CD4-positive, alpha-beta T cell (primary cell): ENCODE measurements at regions of chr13 and their contacts with region 1.

Region 1: DNA sequence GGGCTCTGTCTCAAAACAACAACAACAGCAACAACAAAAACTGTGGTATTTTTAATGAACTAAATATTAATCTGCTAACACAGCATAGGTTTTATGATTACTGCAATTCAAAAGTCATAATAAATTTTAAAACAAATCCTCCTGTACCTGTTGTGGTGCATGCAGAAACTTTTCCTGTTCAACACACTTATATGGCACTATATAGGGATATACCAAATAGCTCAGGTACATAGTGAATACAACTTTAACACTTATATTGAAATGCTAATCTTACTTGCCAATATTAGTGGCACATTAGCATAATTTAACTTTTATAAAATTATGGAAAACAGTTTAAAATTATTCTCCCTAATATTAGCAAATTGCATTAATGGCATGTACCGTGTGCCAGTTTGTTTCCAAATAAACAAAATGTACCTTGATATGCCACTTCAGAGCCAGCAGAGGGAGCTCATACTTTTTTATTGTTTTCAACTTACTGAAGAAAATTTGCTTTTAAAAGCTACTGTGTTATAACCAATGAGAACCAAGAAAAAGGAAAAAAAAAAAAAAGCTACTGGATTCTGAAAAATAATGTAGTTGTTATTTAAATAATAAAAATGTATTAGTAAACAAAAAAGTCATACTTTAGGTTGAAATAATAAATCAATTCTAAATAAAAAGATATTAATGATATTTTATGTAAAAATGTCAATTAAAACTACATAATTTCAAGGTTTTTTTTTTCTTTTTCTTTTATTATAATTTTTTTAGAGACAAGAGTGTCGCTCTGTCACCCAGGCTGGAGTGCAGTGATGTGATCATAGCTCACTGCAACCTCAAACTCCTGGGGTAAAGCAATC is 18.0 kb upstream of the RBM26 start:
- DNase-seq: peak in 4 of 14 experiments; percentile 21 to 73 (median 62)
- ATAC-seq: peak; percentile 71
- H3K4me3 ChIP-seq: no peak overlapping the region
- H3K4me3 Mint-ChIP-seq: no peak overlapping the region
- H3K27ac ChIP-seq: no peak overlapping the region
- H3K27ac Mint-ChIP-seq: no peak overlapping the region
- H3K4me1 ChIP-seq: no peaks in the 10 kb centered on the region
- H3K4me1 Mint-ChIP-seq: no peaks in the 10 kb centered on the region
- H3K27me3 ChIP-seq: no peaks in the 10 kb centered on the region
- H3K27me3 Mint-ChIP-seq: no peaks in the 10 kb centered on the region
- CTCF ChIP-seq: peak; percentile 86

Region 2: DNA sequence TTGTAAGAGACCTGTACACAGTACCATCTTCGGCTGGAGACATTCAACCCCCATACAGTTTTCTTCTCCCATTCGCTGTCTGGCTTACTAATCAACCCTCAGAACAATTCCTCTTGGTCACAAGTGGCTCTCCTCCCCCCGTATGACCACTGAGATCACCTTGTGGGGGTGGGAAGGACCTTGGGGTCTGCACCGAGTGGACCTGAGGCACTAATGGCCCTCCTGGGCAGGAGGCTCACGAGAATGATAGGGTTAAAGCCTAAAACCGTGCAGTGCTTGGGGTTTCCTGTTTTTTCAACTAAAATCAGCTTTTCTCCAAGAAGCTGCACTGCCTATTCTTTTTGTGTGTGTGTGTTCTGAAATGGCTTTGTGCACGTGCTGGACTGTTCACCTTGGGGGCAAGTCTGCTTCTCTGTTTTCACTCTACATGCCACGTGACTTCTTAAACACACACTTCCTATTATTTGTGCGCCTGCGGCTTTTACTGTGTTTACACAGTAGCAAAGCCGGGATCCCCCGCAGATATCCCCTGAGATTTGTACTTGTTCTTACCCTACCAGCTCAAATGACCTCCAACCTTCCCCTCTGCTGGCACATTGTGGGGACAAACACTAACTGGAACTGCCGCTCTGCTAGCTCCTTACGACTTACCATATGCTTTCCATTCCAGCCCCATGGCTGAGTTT is 30.3 kb before region 1 on chr13:
- CTCF ChIA-PET with region 1: interaction called, 7 read pairs
- POLR2A ChIA-PET with region 1: interaction called, 10 read pairs
- intact Hi-C with region 1: no loop called
- DNase-seq: peak in 13 of 14 experiments; percentile 12 to 75 (median 41)
- ATAC-seq: peak; percentile 62
- H3K4me3 ChIP-seq: peak overlapping the region; percentile 42
- H3K4me3 Mint-ChIP-seq: peak overlapping the region; percentile 86
- H3K27ac ChIP-seq: peak overlapping the region; percentile 63 to 65
- H3K27ac Mint-ChIP-seq: peak overlapping the region; percentile 84
- H3K4me1 ChIP-seq: peaks cover 28% of the 10 kb centered on the region
- H3K4me1 Mint-ChIP-seq: peaks cover 75% of the 10 kb centered on the region
- H3K27me3 ChIP-seq: no peaks in the 10 kb centered on the region
- H3K27me3 Mint-ChIP-seq: no peaks in the 10 kb centered on the region
- CTCF ChIP-seq: no peak

Region 3: GRCh38 chr13:79480954-79481684 is 57.1 kb after region 1 on chr13 and contains the start of gene NDFIP2:
- CTCF ChIA-PET with region 1: interaction called, 19 read pairs
- POLR2A ChIA-PET with region 1: interaction called, 3 read pairs
- intact Hi-C with region 1: no loop called
- DNase-seq: peak; percentile 57 to 93 (median 75)
- ATAC-seq: peak; percentile 82
- H3K4me3 ChIP-seq: peak within 1 kb of the TSS; percentile 82
- H3K4me3 Mint-ChIP-seq: peak within 1 kb of the TSS; percentile 95
- H3K27ac ChIP-seq: peak within 1 kb of the TSS in 1 of 2 donors; percentile 46
- H3K27ac Mint-ChIP-seq: peak within 1 kb of the TSS; percentile 79
- H3K4me1 ChIP-seq: peaks cover 20% of the 10 kb centered on the region
- H3K4me1 Mint-ChIP-seq: peaks cover 51% of the 10 kb centered on the region
- H3K27me3 ChIP-seq: no peaks in the 10 kb centered on the region
- H3K27me3 Mint-ChIP-seq: no peaks in the 10 kb centered on the region
- CTCF ChIP-seq: no peak
- total RNA-seq, gene NDFIP2: 3.2 to 3.4 TPM

Region 4: GRCh38 chr13:79528759-79529191 is 104.8 kb after region 1 on chr13:
- CTCF ChIA-PET with region 1: interaction called, 10 read pairs
- POLR2A ChIA-PET with region 1: no interaction called
- intact Hi-C with region 1: no loop called
- DNase-seq: no peak
- ATAC-seq: no peak
- H3K4me3 ChIP-seq: no peak overlapping the region
- H3K4me3 Mint-ChIP-seq: no peak overlapping the region
- H3K27ac ChIP-seq: no peak overlapping the region
- H3K27ac Mint-ChIP-seq: no peak overlapping the region
- H3K4me1 ChIP-seq: no peaks in the 10 kb centered on the region
- H3K4me1 Mint-ChIP-seq: peaks cover 20% of the 10 kb centered on the region
- H3K27me3 ChIP-seq: no peaks in the 10 kb centered on the region
- H3K27me3 Mint-ChIP-seq: no peaks in the 10 kb centered on the region
- CTCF ChIP-seq: no peak